ENCODE measurements at regions of chr15 and their contacts with region 1.

Region 1: DNA sequence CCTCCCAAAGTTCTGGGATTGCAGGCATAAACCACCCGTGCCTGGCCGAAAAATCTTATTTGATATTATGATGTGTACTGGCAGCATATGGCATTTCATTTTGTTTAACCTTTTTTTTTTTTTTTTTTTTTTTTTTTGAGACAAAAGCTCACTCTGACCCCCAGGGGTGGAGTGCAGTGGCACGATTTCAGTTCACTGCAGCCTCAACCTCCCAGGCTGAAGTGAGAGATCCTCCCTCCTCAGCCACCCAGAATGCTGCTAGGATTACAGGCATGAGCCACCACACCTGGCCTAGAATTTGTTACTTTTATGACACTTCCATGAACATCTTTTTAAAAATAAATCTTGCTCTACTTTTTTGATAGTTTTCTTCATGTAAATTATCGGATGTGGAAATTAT is 12.0 kb downstream of the TERB2 start:
- DNase-seq: no peak
- ATAC-seq: no peak
- H3K4me3 Mint-ChIP-seq: no peak overlapping the region
- H3K27ac Mint-ChIP-seq: no peak overlapping the region
- H3K4me1 Mint-ChIP-seq: no peaks in the 10 kb centered on the region
- H3K27me3 Mint-ChIP-seq: no peaks in the 10 kb centered on the region
- CTCF ChIP-seq: no peak

Region 2: GRCh38 chr15:44883199-44883877 is 85.1 kb before region 1 on chr15:
- CTCF ChIA-PET with region 1: no interaction called
- POLR2A ChIA-PET with region 1: no interaction called
- intact Hi-C with region 1: no loop called
- DNase-seq: peak; percentile 41
- ATAC-seq: peak; percentile 18
- H3K4me3 Mint-ChIP-seq: no peak overlapping the region
- H3K27ac Mint-ChIP-seq: peak overlapping the region; percentile 73
- H3K4me1 Mint-ChIP-seq: peaks cover 28% of the 10 kb centered on the region
- H3K27me3 Mint-ChIP-seq: peaks cover 2% of the 10 kb centered on the region
- CTCF ChIP-seq: no peak

Region 3: DNA sequence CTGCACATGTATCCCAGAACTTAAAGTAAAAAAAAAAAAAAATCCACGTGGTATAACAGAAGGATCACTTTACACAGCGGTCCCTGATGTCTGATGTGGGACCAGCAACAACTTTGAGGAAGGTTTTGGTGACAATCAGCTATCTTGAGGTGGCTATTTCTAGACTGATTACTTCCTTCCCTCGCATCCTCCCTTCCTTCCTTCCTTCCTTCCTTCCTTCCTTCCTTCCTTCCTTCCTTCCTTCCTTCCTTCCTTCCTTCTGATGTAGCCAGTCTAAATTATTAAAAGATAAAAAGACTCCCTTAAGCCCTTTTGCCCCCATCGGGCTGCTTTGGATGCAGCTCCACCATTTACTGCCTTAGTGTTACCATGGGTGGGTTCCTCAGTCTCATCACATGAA is 69.5 kb after region 1 on chr15:
- CTCF ChIA-PET with region 1: interaction called, 9 read pairs
- POLR2A ChIA-PET with region 1: no interaction called
- intact Hi-C with region 1: loop called (anchors 5 kb)
- DNase-seq: no peak
- ATAC-seq: no peak
- H3K4me3 Mint-ChIP-seq: no peak overlapping the region
- H3K27ac Mint-ChIP-seq: no peak overlapping the region
- H3K4me1 Mint-ChIP-seq: peaks cover 13% of the 10 kb centered on the region
- H3K27me3 Mint-ChIP-seq: no peaks in the 10 kb centered on the region
- CTCF ChIP-seq: no peak

Region 4: DNA sequence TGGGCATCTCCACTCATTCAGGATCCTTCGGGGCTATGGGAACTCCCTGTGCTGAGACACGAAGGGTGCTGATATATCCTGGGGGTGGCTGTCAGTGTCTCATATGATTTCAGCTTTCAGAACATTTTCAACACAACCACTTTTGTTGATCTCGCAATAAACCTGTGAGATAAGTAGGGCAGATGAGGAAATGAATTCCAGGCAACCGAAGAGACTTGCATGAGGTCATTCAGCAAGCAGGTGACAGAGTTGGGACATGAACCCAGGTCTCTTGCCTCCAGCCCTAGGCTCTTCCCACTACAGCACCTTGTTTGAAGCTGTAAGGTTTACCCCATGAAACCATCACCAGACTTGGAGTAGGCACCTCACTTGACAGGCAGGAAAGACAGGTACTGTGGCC is 177.9 kb after region 1 on chr15:
- CTCF ChIA-PET with region 1: no interaction called
- POLR2A ChIA-PET with region 1: no interaction called
- intact Hi-C with region 1: no loop called
- DNase-seq: no peak
- ATAC-seq: no peak
- H3K4me3 Mint-ChIP-seq: no peak overlapping the region
- H3K27ac Mint-ChIP-seq: no peak overlapping the region
- H3K4me1 Mint-ChIP-seq: no peaks in the 10 kb centered on the region
- H3K27me3 Mint-ChIP-seq: no peaks in the 10 kb centered on the region
- CTCF ChIP-seq: no peak

Measured in activated CD8-positive, alpha-beta T cell treated with anti-CD3 and anti-CD28 coated beads for 36 hours (primary cell).